ENCODE measurements at regions of chr15 and their contacts with region 1.

Region 1: DNA sequence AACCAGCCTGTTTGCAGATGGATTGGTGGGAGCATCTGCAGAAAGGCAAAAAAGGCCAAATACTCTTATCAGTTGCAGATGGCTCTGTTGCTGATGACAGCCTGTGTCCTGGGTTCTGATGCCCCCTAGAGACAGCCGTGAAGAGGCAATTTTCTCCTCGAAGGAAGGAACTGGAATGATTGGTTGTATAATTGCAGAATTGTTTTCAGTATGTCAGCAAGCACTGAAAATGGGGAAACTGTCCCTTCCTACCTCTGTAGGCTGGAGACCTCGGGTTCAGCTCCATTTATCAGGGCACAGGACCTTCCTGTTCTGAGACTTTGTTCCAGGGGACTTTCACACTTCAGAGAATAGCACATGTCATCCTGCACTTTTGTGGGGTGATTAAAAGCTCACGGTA is 103.0 kb downstream of the PGPEP1L start:
- ATAC-seq: peak; percentile 55 to 79 (median 61)
- H3K4me3 ChIP-seq: no peak overlapping the region
- H3K27ac ChIP-seq: no peak overlapping the region
- H3K4me1 ChIP-seq: peaks cover 24 to 28% of the 10 kb centered on the region in 2 donors

Region 2: DNA sequence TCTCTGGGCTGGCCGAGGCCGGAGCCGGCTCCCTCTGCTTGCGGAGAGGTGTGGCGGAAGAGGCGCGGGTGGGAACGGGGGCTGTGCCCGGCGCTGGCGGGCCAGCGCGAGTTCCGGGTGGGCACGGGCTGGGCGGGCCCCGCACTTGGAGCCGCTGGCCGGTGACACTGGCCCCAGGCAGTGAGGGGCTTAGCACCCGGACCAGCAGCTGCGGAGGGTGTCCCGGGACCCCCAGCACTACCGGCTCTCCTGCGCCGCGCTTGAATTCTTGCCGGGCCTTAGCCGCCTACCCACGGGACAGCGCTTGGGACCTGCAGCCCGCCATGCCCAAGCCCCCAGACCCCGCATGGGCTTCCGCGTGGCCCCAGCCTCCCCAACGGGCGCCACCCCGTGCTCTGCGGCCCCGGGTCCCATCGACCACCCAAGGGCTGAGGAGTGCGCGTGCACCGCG is 1680.3 kb before region 1 on chr15:
- in situ Hi-C with region 1: no loop called
- ATAC-seq: no peak
- H3K4me3 ChIP-seq: no peak overlapping the region
- H3K27ac ChIP-seq: no peak overlapping the region
- H3K4me1 ChIP-seq: no peaks in the 10 kb centered on the region

Region 3: DNA sequence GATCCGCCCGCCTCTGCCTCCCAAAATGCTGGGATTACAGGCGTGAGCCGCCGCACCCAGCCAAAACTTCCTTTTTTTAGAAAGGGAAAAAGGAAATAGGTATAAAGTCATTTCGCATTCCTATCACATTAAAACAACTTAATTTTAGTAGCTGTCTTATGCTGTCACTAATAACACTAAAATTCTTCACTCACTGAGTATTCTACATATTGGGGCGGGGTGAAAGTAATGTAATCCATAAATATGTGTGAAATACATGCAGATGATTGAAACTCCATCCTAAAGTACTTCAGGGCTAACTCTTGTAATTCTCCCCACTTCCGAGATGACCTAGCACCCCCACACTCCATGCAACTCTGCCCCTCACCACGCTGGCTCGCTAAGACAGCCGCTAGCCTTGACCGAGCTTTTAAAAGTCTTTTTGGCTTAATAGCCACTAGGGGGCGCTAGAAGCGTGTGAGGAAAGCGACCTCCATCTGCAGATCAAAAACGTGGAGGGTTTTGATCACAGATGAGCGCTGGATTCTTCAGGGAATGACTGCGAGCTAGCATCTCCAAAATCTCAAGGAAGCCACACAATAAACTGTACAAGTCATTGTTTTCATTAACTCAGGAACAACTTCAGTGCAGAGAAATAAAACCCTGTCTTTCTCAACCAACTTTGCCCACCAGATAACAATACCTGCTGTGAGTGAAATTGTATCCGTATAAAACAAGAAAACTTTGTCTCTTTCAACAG is 385.6 kb before region 1 on chr15:
- in situ Hi-C with region 1: loop called in 2 of 9 experiments (anchors 25 kb)
- ATAC-seq: peak; percentile 79 to 97 (median 88)
- H3K4me3 ChIP-seq: no peak overlapping the region
- H3K27ac ChIP-seq: no peak overlapping the region
- H3K4me1 ChIP-seq: peaks cover 2 to 4% of the 10 kb centered on the region in 2 donors

Region 4: DNA sequence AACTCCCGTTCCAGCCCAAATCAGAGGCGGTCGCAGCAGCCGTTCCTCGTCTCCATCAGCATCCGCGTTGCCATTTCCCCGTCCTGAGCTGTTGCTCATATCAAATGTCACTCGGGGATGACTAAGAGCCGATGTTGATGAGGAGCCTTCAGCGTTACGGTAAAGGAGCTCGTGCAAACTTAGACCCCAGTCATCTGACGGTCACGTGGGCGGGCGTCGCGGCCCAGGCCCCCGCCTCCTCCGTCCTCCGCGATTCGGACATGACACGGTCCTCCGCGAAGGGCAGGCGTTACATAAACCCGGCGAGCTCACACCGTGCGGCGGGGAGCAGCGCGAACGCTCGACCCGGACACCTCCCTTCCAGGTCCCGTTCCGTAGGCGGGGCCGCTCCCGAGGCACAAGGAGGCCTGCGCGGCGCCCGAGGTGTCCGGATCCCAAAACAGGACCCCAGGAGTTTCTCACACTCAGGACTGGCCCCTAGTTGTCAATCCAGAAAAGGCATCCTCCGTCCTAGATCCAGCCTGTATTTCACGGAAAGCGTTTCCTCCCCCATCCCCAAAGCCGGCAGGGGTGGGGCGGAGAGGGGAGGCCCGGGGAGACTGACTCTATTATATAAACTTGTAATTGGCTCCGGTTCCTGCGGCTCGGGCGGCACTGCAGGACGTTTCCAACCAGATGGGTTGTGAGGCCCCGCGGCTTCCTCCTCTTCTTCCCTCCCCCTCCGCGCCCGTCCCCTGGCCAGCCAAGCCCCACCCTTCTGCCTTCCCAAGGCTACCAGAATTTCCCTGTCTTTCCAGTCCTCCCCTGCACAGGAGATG is 356.2 kb before region 1 on chr15:
- in situ Hi-C with region 1: loop called in 2 of 9 experiments (anchors 25 kb)
- ATAC-seq: peak; percentile 68 to 85 (median 81)
- H3K4me3 ChIP-seq: peak overlapping the region; percentile 43 to 53 (median 46)
- H3K27ac ChIP-seq: peak overlapping the region in 1 of 2 donors; percentile 66
- H3K4me1 ChIP-seq: peaks cover 5 to 7% of the 10 kb centered on the region in 2 donors